ENCODE measurements at regions of chr7 and their contacts with region 1.

Region 1: DNA sequence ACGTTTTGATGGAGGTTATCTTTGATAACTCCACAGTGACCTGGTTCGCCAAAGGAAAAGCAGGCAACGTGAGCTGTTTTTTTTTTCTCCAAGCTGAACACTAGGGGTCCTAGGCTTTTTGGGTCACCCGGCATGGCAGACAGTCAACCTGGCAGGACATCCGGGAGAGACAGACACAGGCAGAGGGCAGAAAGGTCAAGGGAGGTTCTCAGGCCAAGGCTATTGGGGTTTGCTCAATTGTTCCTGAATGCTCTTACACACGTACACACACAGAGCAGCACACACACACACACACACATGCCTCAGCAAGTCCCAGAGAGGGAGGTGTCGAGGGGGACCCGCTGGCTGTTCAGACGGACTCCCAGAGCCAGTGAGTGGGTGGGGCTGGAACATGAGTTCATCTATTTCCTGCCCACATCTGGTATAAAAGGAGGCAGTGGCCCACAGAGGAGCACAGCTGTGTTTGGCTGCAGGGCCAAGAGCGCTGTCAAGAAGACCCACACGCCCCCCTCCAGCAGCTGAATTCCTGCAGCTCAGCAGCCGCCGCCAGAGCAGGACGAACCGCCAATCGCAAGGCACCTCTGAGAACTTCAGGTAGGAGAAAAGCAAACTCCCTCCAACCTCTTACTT is at the start of gene SERPINE1:
- DNase-seq: peak; percentile 99
- H3K4me3 ChIP-seq: peak within 1 kb of the TSS; percentile 91
- H3K27ac ChIP-seq: peak within 1 kb of the TSS; percentile 89
- H3K27me3 ChIP-seq: no peaks in the 10 kb centered on the region
- CTCF ChIP-seq: peak; percentile 49
- polyA plus RNA-seq, gene SERPINE1: 356 and 417 TPM in 2 replicates

Region 2: DNA sequence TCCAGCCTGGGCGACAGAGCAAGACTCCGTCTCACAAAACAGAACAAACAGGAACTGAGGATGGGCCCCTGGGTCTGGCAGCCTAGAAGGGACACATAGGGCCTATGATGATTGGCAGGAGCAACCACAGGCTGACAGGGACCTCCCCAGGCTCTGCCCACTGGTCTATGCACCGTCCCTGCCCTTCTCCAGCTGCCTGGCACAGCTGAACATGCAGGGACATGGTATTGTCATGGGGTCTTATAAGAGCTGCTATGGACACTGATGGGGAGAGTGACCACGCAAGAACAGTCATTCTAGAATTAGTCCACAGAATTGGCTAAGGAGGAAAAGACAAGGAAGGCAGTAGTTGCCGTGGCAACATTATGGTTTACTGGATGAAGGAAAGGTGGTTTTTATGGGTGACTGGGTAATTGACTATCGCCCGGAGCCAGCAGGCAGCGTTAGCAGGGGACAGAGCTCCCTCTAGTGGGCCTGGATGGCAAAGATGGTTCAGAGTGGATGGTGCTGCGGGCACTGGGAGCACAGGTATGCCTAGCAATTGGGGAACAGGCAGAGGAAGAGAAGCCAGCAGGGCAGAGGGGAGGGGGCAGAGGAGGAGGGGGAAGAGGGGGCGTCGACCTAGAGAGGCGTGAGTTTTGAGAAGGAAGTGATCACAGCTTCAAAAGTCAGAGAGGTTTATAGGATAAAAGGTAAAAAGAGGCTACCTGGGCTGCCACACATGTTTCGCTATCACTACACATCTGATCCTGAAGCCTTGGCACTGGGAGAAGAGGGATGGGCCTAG is 49.3 kb before region 1 on chr7:
- CTCF ChIA-PET with region 1: interaction called, 10 read pairs
- POLR2A ChIA-PET with region 1: no interaction called
- DNase-seq: no peak
- H3K4me3 ChIP-seq: no peak overlapping the region
- H3K27ac ChIP-seq: no peak overlapping the region
- H3K27me3 ChIP-seq: peaks cover under 1% of the 10 kb centered on the region
- CTCF ChIP-seq: peak; percentile 95

Region 3: GRCh38 chr7:101085162-101085987 is 41.4 kb before region 1 on chr7 and contains the start of gene TRIM56:
- CTCF ChIA-PET with region 1: no interaction called
- POLR2A ChIA-PET with region 1: interaction called, 13 read pairs
- DNase-seq: peak; percentile 36
- H3K4me3 ChIP-seq: peak within 1 kb of the TSS; percentile 93
- H3K27ac ChIP-seq: peak within 1 kb of the TSS; percentile 84
- H3K27me3 ChIP-seq: no peaks in the 10 kb centered on the region
- CTCF ChIP-seq: no peak
- polyA plus RNA-seq, gene TRIM56: 4.0 and 5.3 TPM in 2 replicates

Region 4: GRCh38 chr7:101094416-101095375 is 32.1 kb before region 1 on chr7:
- CTCF ChIA-PET with region 1: interaction called, 12 read pairs
- POLR2A ChIA-PET with region 1: interaction called, 23 read pairs
- DNase-seq: peak; percentile 29
- H3K4me3 ChIP-seq: no peak overlapping the region
- H3K27ac ChIP-seq: peak overlapping the region; percentile 90
- H3K27me3 ChIP-seq: no peaks in the 10 kb centered on the region
- CTCF ChIP-seq: peak; percentile 76

Region 5: DNA sequence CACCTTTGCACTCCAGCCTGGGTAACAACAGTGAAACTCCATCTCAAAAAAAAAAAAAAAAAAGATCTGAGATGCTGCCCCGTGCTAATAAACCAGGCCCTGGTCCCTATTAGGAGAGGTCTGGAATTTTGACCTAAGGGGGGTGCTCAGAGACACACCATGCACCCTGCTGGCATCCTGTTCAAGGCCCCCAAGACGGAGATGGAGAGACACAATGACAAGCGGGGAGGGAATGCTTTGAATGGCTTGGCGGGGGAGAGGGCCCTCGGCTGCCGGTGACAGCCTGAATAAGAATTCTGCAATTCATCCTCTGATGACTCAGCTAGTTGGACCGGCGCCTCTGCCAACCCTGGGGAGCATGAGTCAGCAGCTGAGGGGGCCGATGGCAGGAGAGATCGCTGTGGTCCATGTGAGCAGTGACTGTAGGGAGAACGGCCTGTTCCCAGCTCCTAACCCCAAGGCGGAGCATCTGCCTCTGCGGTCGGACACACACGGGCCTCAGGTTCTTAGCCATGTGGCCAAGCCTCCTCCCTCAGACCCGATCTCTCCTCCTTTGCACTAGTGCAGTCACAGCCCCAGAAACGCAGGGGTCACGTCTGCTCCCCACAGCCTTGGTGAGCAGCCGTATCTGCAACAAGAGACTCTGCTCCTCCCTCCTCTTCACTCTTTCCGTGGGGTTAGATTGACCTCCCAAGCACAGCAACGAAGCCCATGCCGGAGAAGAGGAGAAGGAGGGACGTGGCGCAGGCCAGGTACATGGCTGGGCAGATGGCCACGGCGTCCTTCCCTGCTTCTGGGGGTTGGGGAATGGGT is 26.6 kb before region 1 on chr7:
- CTCF ChIA-PET with region 1: interaction called, 12 read pairs
- POLR2A ChIA-PET with region 1: interaction called, 23 read pairs
- DNase-seq: peak; percentile 97
- H3K4me3 ChIP-seq: peak overlapping the region; percentile 20; the same call in 1 of the 2 replicates
- H3K27ac ChIP-seq: peak overlapping the region; percentile 99
- H3K27me3 ChIP-seq: no peaks in the 10 kb centered on the region
- CTCF ChIP-seq: no peak

Region 6: DNA sequence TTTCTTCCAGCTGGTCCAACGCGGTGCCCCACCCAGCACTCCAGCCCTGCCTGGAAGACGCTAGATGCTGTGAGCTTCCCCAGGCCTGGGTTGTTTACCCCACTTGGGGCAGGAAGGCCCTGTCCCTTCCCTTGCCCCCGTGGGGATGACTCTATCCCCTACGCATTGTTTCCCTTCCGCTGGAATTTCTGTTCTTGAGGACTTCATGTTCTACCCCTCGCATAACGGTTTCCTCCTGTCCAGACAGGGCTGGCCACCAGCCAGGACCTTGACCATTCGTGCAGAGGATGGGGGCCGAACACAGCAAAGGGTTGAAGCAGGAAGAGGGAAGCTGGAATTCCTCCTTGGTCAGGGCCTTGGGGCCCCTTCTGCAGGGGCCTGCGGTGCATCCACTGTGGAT is 14.5 kb before region 1 on chr7:
- CTCF ChIA-PET with region 1: no interaction called
- POLR2A ChIA-PET with region 1: interaction called, 18 read pairs
- DNase-seq: no peak
- H3K4me3 ChIP-seq: no peak overlapping the region
- H3K27ac ChIP-seq: peak overlapping the region; percentile 21
- H3K27me3 ChIP-seq: no peaks in the 10 kb centered on the region
- CTCF ChIP-seq: no peak